WTC11 (cell line): ENCODE measurements at regions of chr11 and their contacts with region 1.

Region 1: DNA sequence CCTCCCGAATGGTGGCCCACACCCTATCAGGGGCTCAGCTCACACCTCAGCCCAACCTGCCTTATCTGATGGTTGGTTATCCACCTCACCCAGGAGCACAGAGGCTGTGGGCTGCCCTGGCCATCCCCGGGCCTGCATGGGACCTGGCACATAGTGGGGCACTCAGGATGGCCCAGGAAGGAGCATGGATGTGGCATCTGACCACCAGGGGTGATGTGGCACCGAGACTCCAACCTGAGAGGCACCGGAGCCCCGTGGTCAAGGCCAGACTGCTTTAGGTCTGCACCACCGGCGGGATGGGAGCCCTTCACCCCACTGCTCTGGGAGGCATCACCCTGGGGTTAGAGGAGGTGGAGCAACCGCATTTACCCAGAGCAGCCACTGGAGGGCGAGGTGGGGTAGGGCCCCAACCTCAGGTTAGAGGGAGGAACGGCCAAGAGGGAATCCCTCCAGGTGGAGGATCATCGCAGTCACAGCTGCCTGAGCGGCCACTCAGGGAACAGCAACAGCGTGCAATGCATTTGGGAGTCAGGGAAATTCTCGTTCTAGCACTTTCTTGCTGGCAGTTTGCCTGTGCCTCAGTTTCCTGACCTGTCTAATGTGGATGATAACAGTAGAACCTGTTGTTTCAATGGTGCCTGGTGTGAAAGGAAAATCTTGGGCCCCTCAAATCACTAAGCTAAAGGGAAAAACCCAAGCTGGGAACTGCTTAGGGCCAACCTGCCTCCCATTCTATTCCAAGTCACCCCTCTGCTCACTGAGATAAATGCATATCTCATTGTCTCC is 52.9 kb upstream of the CARS1 start:
- DNase-seq: peak; percentile 85
- ATAC-seq: peak; percentile 93
- H3K4me3 Mint-ChIP-seq: no peak overlapping the region
- H3K27ac Mint-ChIP-seq: no peak overlapping the region
- H3K4me1 Mint-ChIP-seq: peaks cover 17% of the 10 kb centered on the region
- H3K27me3 Mint-ChIP-seq: peaks cover 3% of the 10 kb centered on the region; the same call in 1 of the 2 replicates
- CTCF ChIP-seq: peak; percentile 65

Region 2: DNA sequence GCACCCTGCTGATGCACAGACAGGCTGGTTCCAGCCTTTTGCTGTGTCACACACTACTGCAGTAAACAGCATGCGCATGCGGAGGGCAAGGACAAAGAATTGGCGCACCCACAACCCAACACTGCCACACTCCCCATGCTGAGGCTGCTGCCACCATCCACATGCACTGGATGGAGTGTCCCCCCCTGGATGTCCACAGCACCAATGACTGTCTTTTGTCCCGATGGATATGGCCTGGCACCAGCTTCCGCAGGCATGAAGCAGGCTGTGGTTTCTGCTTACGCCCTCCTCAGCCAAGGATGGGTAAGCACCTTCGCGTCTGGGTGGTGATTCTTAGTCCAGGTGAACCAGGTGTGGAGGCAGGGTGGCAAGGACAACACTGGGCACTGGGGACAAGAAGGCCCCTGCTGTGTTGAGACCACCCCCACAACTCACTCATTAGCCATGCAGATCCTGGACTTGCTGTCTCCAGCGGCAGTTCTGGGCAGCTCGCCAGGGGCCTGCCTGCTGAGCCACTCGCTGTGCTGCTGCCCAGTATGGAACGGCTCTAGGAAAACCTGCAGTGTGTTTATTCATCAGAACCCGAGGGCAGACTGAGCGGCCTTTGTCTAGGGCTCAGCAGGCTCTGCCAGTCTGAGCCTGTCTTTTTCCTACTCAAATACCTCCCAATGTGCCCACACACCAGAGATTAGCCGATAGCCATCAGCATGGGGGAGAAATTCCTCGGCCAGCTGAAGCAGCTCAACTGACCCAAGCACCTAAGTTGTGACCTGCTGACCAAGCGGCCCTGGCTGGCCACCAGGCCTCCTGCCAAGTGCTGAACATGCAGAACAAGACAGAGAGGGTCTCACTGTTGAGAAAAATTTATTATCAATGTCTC is 109.8 kb before region 1 on chr11:
- CTCF ChIA-PET with region 1: no interaction called
- POLR2A ChIA-PET with region 1: no interaction called
- DNase-seq: no peak
- ATAC-seq: no peak
- H3K4me3 Mint-ChIP-seq: no peak overlapping the region
- H3K27ac Mint-ChIP-seq: peak overlapping the region; percentile 49
- H3K4me1 Mint-ChIP-seq: peaks cover 4% of the 10 kb centered on the region
- H3K27me3 Mint-ChIP-seq: no peaks in the 10 kb centered on the region
- CTCF ChIP-seq: no peak

Region 3: DNA sequence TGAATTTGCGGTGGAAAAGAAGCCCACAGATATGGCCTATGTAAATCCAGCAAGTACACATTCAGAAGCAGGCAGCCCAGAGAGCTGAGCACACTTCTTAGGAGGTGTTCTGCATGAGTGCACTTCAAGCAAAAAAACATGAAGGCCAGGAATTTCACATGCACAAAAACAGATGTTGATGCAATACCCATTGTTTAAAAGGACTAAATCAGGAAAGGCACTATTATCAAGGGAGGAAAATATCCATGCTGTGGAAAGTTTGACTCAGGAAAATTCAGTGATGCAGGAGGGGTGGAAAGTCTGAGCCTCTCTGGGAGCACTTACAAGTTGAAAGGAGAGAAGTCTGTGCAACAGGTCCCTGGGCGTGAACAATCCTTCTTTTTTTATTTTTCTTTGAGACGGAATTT is 37.1 kb before region 1 on chr11:
- CTCF ChIA-PET with region 1: no interaction called
- POLR2A ChIA-PET with region 1: no interaction called
- DNase-seq: no peak
- ATAC-seq: no peak
- H3K4me3 Mint-ChIP-seq: no peak overlapping the region
- H3K27ac Mint-ChIP-seq: peak overlapping the region; percentile 37; the same call in 1 of the 2 replicates
- H3K4me1 Mint-ChIP-seq: 0 out of 2 replicates have a peak, but pooled peaks cover 4% of the 10 kb centered on the region
- H3K27me3 Mint-ChIP-seq: no peaks in the 10 kb centered on the region
- CTCF ChIP-seq: no peak

Region 4: DNA sequence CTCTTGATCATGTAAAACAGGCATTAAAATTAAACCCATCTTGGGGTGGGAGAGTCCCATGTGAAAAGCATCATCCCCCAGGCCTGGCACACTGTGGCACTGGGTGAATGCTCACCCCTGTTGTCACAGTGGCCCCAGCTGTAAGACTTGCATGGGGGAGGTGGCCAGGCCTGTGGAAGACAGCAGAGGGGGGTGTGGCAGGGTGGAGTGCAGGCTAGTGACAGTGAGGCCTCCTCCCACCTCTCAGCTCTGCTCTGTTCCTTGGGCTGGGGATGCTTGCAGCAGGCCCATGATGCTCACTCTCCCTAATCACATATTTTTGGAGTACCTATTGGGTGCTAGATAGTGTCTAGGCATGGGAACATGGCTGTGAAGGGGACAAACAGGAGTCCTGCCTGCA is 65.1 kb after region 1 on chr11:
- CTCF ChIA-PET with region 1: no interaction called
- POLR2A ChIA-PET with region 1: no interaction called
- DNase-seq: no peak
- ATAC-seq: no peak
- H3K4me3 Mint-ChIP-seq: no peak overlapping the region
- H3K27ac Mint-ChIP-seq: no peak overlapping the region
- H3K4me1 Mint-ChIP-seq: no peaks in the 10 kb centered on the region
- H3K27me3 Mint-ChIP-seq: peaks cover 16% of the 10 kb centered on the region
- CTCF ChIP-seq: no peak

Region 5: GRCh38 chr11:3195251-3196160 is 85.4 kb after region 1 on chr11:
- CTCF ChIA-PET with region 1: interaction called, 11 read pairs
- POLR2A ChIA-PET with region 1: no interaction called
- DNase-seq: no peak
- ATAC-seq: no peak; the same call in 1 of the 2 replicates
- H3K4me3 Mint-ChIP-seq: no peak overlapping the region
- H3K27ac Mint-ChIP-seq: no peak overlapping the region
- H3K4me1 Mint-ChIP-seq: peaks cover 13% of the 10 kb centered on the region
- H3K27me3 Mint-ChIP-seq: peaks cover 2% of the 10 kb centered on the region; the same call in 1 of the 2 replicates
- CTCF ChIP-seq: no peak